A673 (cell line): ENCODE measurements at regions of chr13 and their contacts with region 1.

Region 1: DNA sequence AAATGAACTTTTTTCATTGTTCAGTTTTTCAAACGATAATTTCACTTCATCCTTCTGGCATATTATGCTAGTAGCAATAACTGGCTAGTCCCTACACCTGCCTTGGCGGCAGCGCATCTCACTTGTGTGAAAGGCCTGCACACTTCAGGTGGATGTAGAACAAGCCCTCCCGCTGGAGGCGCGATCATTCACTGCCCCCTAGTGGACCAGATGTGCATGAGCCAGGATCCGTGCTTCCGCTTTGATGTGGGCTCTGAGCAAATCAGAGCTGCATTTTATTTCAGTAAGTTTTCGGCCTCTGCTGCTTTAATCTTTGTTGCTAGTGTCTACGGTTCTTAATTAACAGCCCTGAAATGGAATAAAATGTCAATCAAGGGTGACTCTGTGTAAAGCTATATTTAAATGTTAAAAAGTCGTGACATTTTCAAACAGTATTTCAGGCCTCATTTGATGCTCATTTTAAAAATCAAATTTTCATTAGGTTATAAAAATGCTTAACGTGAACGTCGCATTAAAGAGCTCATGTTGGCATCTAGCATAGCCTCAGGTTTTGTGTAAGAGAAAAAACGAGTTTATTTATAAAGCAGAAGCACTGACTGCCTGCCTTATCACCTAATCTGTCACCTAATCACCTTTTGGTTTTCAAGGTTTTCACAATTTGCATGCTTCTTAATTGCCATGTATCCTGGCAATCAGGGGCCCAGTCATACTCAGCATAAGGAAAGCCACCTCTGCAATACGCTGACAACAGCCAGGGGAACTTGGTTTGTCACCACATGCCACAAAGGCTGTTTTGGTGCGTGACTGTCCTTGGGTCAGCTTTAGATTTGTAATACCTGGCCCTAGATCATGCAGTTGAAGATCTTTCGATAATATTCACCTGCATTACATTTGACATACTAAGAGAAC is 112.2 kb downstream of the TEX26 start:
- DNase-seq: peak; percentile 89
- H3K4me3 ChIP-seq: no peak overlapping the region
- H3K27ac ChIP-seq: peak overlapping the region; percentile 68
- H3K4me1 ChIP-seq: peaks cover 44% of the 10 kb centered on the region
- H3K27me3 ChIP-seq: no peaks in the 10 kb centered on the region
- CTCF ChIP-seq: peak; percentile 95

Region 2: DNA sequence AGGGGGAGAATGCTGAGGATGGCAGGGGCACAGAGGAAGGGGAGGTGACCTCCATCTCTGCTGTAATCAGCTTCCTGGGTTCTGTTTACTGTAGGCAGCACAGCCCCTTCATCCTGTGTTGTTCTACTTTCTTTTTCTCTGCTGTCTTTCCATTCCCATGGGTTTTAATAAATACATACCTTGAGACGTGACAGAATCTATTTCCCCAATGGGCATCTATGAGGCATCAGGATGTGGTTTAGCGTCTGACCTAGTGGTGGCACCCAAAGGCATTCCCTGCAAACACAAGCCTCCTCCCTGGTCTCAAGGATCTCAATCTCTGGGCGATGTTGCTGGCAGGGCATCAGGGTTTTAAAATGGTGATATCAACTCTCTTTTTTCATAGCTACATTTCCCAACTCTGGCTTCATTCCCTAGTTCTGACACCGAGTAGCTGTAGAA is 248.5 kb before region 1 on chr13:
- CTCF ChIA-PET with region 1: no interaction called
- POLR2A ChIA-PET with region 1: no interaction called
- intact Hi-C with region 1: loop called (anchors 5 kb)
- DNase-seq: peak; percentile 20
- H3K4me3 ChIP-seq: peak overlapping the region; percentile 23
- H3K27ac ChIP-seq: no peak overlapping the region
- H3K4me1 ChIP-seq: peaks cover 32% of the 10 kb centered on the region
- H3K27me3 ChIP-seq: no peaks in the 10 kb centered on the region
- CTCF ChIP-seq: peak; percentile 21; the same call in 1 of the 2 replicates

Region 3: GRCh38 chr13:30808589-30808988 is 236.0 kb before region 1 on chr13:
- CTCF ChIA-PET with region 1: interaction called, 10 read pairs
- POLR2A ChIA-PET with region 1: no interaction called
- intact Hi-C with region 1: no loop called
- DNase-seq: no peak
- H3K4me3 ChIP-seq: no peak overlapping the region
- H3K27ac ChIP-seq: no peak overlapping the region
- H3K4me1 ChIP-seq: no peaks in the 10 kb centered on the region
- H3K27me3 ChIP-seq: no peaks in the 10 kb centered on the region
- CTCF ChIP-seq: no peak

Region 4: DNA sequence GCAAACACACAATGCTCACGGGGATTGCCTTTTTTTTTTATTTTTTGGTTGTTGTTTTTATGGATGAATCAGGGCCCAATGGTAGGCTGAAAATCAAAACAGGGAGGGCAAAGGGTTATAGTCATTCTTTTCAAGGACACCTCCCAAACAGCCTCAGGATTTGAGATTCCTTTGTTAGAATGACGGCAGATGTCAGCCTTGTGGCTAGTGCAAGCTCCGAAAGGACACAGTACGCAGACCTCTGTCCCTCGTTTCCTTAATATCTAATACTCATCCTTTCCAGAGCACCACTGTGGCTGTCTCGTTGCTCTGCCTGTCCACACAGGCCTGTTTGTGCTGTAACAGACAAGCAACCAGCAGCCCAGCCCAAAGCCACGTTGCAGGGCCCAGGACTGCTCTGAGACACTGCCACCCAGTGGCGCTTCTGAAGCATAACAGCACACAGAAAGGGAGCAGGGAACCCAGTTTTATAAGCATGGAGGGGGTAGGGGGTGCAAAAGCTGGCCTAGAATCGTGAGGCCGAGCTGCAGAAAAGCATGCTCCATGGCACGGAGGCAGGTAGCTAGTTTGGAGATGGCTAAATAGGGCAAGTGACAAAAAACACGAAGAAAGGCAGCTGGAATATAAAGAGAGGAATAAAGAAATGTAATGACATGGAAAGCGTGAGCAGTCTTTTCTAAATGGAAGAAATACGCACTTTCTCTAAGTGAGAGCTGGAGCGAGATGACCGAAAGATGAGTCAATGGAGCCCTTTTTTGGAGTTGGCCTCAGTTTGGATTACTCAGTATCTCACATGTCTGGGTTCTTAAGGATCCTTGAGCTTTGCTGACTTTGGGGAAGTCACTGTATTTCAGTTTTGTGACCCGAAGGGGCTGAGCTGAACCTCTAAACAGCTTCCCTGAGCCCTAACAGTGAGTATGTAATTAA is 179.2 kb before region 1 on chr13:
- CTCF ChIA-PET with region 1: interaction called, 3 read pairs
- POLR2A ChIA-PET with region 1: no interaction called
- intact Hi-C with region 1: loop called (anchors 5 kb)
- DNase-seq: peak; percentile 91
- H3K4me3 ChIP-seq: no peak overlapping the region
- H3K27ac ChIP-seq: no peak overlapping the region
- H3K4me1 ChIP-seq: peaks cover 14% of the 10 kb centered on the region
- H3K27me3 ChIP-seq: no peaks in the 10 kb centered on the region
- CTCF ChIP-seq: peak; percentile 98

Region 5: DNA sequence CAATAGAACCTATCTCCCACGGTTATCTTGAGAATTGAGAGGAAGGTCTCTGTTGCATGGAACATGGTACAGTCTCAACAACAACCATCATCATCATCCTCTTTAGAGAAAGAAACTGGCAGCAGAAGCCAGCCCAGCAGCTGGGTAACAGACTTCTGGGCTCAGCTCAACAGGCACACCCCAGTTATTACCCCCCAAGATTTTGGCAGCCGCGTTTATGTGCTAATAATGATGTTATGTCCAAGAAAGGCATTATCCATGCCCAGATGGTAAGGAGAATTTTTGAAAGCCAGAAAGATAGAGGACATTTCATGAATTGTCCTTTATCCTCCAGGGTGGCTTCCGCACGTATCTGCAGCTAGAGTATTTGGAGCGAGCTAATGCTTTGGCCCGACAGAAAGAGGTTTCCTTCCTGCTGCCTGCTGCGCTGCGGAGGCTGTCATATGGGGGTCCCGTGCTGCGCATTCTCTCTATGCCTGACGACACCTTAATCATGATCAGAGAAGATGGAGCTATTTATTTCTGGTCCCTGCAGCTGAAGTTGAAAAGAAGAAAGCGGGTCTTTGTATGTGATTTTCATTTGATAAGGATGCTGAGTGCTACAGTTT is 22.2 kb before region 1 on chr13:
- CTCF ChIA-PET with region 1: interaction called, 12 read pairs
- POLR2A ChIA-PET with region 1: interaction called, 5 read pairs
- intact Hi-C with region 1: loop called (anchors 1 kb)
- DNase-seq: peak; percentile 89
- H3K4me3 ChIP-seq: peak overlapping the region; percentile 10
- H3K27ac ChIP-seq: peak overlapping the region; percentile 99
- H3K4me1 ChIP-seq: peaks cover 38% of the 10 kb centered on the region
- H3K27me3 ChIP-seq: no peaks in the 10 kb centered on the region
- CTCF ChIP-seq: no peak